ENCODE measurements at regions of chr4 and their contacts with region 1.

Region 1: DNA sequence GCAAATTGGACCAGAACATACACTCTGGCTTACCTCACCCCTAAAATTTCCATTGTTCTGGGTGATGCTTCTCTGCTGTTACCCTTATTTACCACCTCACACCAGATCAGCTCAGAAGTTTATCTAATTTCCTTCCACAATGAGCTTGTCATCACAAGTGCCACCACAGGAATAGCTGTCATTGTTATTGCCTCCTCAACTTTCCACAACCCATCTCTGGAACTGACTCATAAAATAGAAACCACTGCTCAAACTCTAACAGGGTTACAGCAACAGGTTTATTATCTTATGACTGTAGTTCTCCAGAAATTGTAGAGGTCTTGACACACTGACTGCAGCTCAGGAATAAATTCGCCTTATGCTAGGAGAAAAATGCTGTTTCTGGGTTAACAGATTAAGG is 52.7 kb downstream of the ZNF718 start:
- DNase-seq: no peak
- H3K4me3 Mint-ChIP-seq: no peak overlapping the region
- H3K27ac Mint-ChIP-seq: no peak overlapping the region
- H3K4me1 Mint-ChIP-seq: no peaks in the 10 kb centered on the region
- H3K27me3 Mint-ChIP-seq: no peaks in the 10 kb centered on the region

Region 2: DNA sequence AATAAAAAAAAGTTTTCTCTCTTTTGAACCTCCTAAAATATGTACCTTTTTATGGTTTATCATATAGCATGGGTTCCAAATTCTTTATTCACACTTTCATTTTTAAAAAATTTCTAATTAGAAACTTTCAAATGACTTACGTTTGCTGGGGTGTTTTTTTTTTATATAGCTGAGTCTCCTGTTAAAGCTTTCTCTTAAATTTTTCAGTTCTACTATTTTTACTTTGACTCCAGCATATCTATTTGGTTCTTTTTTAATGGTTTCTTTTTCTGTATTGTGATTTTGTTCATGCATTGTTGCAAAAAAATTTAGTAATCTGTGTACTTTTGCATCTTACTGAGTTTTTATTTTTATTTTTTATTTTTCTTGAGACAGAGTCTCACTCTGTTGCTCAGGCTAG is 30.4 kb before region 1 on chr4:
- CTCF ChIA-PET with region 1: no interaction called
- POLR2A ChIA-PET with region 1: no interaction called
- DNase-seq: no peak
- H3K4me3 Mint-ChIP-seq: no peak overlapping the region
- H3K27ac Mint-ChIP-seq: no peak overlapping the region
- H3K4me1 Mint-ChIP-seq: no peaks in the 10 kb centered on the region
- H3K27me3 Mint-ChIP-seq: no peaks in the 10 kb centered on the region

Region 3: GRCh38 chr4:188076-188475 is 11.1 kb after region 1 on chr4:
- CTCF ChIA-PET with region 1: interaction called, 4 read pairs
- POLR2A ChIA-PET with region 1: interaction called, 10 read pairs
- DNase-seq: no peak
- H3K4me3 Mint-ChIP-seq: no peak overlapping the region
- H3K27ac Mint-ChIP-seq: no peak overlapping the region
- H3K4me1 Mint-ChIP-seq: no peaks in the 10 kb centered on the region
- H3K27me3 Mint-ChIP-seq: no peaks in the 10 kb centered on the region

Region 4: DNA sequence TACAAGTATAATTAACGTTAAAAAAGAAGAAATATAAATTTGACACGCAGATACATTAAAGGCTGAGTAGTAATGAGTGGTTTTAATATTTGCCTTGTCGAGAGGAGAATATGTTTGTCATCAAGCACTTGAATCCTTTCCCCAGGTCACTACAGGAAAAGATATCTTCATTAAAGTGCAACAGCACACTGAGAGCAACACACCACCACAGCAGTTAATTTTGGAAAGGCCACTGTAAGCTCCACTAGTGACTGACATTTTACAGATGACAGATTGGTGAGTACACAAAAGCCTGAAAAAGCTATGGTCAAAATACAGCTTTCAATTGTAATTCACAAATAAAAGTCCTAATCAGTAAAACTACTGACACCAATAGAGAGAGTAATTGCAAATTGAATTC is 23.9 kb after region 1 on chr4:
- CTCF ChIA-PET with region 1: no interaction called
- POLR2A ChIA-PET with region 1: no interaction called
- DNase-seq: no peak
- H3K4me3 Mint-ChIP-seq: no peak overlapping the region
- H3K27ac Mint-ChIP-seq: no peak overlapping the region
- H3K4me1 Mint-ChIP-seq: no peaks in the 10 kb centered on the region
- H3K27me3 Mint-ChIP-seq: no peaks in the 10 kb centered on the region